Left ventricle myocardium superior (tissue), 1 donor: ENCODE measurements at regions of chr5 and their contacts with region 1.

Region 1: GRCh38 chr5:36751886-36752285 is 124.7 kb upstream of the NIPBL start:
- DNase-seq: no peak
- ATAC-seq: no peak

Region 2: DNA sequence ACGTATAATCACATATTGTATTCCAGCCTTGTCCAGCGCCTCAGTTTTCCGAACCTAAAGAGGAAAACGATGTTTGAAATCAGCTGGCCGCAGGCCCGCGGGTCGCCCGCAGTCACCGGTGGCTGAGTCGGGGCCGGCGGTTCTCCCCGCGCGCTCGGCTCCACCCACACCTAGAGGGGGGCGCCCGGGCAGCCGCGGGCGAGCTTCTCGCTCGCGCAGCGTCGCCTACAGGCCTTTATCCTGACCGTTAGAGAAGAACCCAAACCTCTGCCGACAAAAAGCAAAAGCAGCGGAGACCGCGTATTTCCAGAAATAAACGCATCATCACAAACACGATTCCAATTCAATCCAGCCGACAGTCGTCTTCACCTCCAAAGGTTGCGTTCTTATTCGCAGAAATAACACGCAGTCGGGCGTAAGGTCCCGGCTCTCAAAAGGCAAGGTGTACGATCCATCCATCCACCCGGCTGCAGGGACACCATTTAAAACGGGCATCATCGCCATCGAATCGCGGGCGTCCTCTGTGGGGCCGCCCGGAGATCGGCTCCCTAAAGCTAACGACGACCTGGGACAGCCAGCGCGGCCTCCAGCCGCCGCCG is 124.0 kb after region 1 on chr5:
- intact Hi-C with region 1: no loop called
- DNase-seq: peak; percentile 91
- ATAC-seq: peak; percentile 90

Region 3: DNA sequence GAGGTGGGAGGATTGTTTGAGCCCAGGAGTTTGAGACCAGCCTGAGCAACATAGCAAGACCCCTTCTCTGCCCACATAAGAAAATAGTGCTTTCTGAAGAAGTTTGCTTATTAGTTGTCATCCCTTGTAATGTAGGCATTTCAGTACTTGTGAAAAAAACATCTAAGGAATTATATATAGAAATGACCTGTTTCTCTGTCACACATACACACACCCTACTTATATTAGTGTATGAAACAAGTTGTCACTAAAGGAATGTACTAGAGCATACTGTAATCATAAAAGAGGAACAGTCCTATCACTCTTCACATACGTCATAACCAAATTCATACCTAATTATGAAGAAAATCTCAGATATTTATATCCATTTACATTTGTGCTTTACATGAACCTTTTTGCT is 246.7 kb after region 1 on chr5:
- intact Hi-C with region 1: loop called (anchors 10 kb)
- DNase-seq: no peak
- ATAC-seq: no peak